AG04449 (cell line): ENCODE measurements at regions of chr16 and their contacts with region 1.

Region 1: DNA sequence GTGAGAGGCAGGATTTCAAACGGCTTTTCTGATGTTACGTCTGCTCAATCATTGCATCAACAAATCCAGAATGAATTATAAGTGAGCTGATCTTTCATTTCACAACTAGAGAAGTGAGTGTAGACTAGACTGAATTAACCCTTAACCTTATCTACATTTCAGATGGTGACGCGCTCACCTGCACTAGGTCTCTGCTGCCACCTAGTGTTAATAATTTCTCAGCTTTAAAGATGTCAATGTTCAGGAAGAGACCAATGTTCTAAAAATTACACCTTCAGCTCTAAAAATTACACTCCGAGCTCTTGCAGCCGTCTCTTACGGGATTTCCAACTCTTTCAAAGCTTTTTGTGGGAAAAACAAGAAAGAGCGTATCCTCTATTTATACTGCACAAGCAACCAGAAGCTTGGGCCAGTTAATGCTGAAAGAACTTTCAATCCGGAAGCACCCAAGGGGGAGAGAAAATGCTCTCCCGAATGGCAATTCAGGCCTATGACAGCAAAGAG is 88.2 kb upstream of the FA2H start:
- DNase-seq: no peak
- H3K4me3 ChIP-seq: no peak overlapping the region
- CTCF ChIP-seq: peak; percentile 56

Region 2: DNA sequence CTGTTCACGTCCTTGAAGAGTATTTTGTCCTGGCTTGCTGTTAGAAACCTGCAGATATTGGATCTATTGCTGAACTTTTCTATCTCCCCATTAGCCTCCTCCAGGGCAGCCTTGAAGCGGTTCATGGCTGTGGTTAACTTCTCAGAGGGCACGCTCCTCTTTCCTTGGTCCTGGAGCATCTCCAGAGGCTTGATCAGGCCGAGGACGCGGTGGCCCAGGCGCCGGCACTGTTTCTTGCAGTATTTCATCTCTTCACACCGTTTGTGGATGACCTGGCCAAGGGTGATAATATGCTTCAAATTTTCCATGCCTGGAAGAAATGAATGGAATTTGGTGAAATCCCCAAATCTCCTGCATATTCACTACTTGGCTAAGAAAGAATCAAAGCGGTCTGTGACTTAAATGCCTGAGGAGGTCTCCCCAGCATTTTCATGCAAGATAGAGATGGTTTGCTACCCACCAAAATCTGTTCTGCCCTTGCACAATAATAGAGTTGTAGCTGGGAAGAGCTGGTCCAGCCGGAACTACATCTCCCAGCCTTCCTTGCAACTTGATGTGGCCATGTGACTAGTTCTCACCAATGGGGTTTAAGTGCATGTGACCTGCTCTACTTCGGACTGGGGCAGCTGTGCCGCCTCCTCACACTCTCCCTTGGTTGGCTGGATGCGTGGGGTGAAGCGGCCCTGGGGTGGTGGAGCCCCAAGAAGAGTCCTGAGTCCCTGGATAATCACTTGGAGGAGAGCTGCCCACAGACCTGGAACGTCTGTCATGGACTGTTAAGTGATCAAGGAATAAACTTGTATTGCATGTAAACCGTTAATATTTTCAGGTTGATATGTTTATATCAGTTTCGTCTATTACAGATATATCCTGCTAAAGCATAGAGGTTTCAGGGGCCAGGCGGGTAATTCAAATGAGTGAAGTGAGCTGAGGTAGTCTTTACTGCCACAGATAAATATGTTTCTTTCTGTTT is 167.1 kb before region 1 on chr16:
- CTCF ChIA-PET with region 1: interaction called, 68 read pairs
- POLR2A ChIA-PET with region 1: no interaction called
- DNase-seq: peak; percentile 70
- H3K4me3 ChIP-seq: peak overlapping the region; percentile 43
- CTCF ChIP-seq: no peak

Region 3: GRCh38 chr16:74726716-74727115 is 136.1 kb before region 1 on chr16:
- CTCF ChIA-PET with region 1: interaction called, 21 read pairs
- POLR2A ChIA-PET with region 1: no interaction called
- DNase-seq: no peak
- H3K4me3 ChIP-seq: no peak overlapping the region
- CTCF ChIP-seq: no peak

Region 4: DNA sequence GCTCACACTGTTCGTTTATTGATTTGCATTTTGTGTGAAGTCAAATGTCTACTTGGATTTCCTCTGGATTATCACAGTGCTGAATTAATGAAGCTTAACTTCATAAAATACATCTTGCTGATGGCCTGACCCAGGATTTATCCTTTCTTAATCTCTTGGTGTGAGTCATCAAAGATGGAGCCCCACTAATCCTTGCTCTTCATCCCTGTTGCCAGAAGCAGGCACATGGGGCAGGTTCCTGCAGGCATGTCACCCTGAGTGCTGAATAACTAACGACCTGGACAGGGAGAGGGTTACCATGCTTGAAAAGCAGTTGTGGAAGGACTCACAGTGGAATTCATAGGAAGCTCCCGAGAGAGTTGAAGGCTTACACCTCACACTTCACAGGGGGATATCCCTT is 32.1 kb before region 1 on chr16:
- CTCF ChIA-PET with region 1: interaction called, 14 read pairs
- POLR2A ChIA-PET with region 1: no interaction called
- DNase-seq: no peak
- H3K4me3 ChIP-seq: no peak overlapping the region
- CTCF ChIP-seq: no peak

Region 5: GRCh38 chr16:74852500-74852875 is 10.3 kb before region 1 on chr16:
- CTCF ChIA-PET with region 1: interaction called, 37 read pairs
- POLR2A ChIA-PET with region 1: no interaction called
- DNase-seq: no peak
- H3K4me3 ChIP-seq: no peak overlapping the region
- CTCF ChIP-seq: no peak

Region 6: DNA sequence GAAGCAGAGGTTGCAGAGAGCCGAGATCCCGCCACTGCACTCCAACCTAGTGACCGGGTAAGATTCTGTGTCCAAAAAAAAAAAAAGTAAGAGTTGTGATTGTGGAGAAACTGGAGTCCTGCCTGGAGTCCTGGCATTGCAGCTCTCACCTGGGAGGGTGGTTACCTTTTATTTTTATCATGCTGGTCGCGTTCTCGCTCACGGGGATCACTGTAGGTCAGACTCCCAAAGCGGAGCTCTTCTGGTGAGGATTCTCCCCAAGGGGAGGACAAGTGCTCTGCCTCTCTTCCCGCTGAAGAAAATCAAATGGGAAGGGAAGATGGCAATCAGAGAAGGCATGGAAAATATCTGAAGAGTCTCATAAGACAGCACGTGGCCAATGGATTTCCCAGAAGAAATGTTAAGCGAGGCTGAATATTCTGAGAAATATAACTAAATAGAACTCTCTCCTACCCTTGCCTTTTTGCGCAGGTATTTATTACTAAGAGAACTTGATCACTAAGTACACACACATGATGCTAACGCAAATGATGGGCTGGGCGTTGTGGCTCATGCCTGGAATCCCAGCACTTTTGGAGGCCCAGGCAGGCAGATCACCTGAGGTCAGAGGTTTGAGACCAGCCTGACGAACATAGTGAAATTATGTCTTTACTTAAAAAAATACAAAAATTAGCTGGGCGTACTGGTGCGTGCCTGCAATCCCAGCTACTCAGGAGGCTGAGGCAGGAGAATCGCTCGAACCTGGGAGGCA is 23.5 kb after region 1 on chr16:
- CTCF ChIA-PET with region 1: interaction called, 26 read pairs
- POLR2A ChIA-PET with region 1: interaction called, 5 read pairs
- DNase-seq: no peak
- H3K4me3 ChIP-seq: no peak overlapping the region
- CTCF ChIP-seq: no peak

Region 7: GRCh38 chr16:74944466-74944865 is 81.7 kb after region 1 on chr16:
- CTCF ChIA-PET with region 1: no interaction called
- POLR2A ChIA-PET with region 1: no interaction called
- DNase-seq: no peak
- H3K4me3 ChIP-seq: no peak overlapping the region
- CTCF ChIP-seq: no peak

Region 8: GRCh38 chr16:75110637-75111513 is 248.1 kb after region 1 on chr16:
- CTCF ChIA-PET with region 1: interaction called, 15 read pairs
- POLR2A ChIA-PET with region 1: no interaction called
- DNase-seq: peak; percentile 55
- H3K4me3 ChIP-seq: peak overlapping the region; percentile 42
- CTCF ChIP-seq: peak; percentile 96